Caco-2 (cell line): ENCODE measurements at regions of chr10 and their contacts with region 1.

Region 1: DNA sequence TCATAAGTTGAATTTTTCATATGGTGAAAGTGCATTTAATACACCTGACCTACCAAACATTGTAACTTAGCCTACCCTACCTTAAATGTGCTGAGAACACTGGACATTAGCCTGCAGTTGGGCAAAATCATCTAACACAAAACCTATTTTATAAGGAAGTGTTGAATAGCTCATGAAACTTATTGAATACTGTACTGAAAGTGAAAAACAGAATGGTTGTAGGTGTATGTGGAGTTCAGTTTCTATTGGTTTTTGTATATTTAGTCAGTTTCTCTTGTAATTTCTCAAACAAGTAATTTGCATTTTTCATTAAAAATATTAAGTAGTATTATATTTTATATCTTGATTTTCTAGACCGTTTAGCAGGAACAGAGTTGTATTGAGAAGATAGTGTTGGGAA is 15.3 kb downstream of the CCDC7 start:
- DNase-seq: no peak
- H3K4me3 ChIP-seq: no peak overlapping the region
- H3K4me3 Mint-ChIP-seq: no peak overlapping the region
- H3K27ac Mint-ChIP-seq: no peak overlapping the region
- H3K4me1 ChIP-seq: no peaks in the 10 kb centered on the region
- H3K4me1 Mint-ChIP-seq: no peaks in the 10 kb centered on the region
- H3K27me3 ChIP-seq: no peaks in the 10 kb centered on the region
- H3K27me3 Mint-ChIP-seq: peaks cover 2% of the 10 kb centered on the region
- CTCF ChIP-seq: no peak

Region 2: DNA sequence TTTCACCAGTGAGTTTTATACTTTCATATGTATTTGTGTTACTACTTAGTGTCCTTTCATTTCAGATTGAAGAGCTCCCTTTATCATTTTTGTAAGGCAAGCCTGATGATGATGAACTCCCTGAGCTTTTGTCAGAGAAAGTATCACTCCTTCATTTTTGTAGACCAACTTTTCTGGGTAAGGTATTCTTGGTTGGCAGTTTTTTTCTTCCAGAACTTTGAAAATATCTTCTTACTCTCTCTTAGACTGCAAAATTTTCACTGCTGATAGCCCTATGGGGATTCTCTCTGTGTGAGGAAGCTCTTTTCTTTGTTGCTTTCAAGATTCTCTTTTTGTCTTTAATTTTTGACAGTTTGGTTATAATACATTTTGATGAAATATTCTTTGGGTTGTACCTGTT is 20.4 kb after region 1 on chr10:
- CTCF ChIA-PET with region 1: no interaction called
- POLR2A ChIA-PET with region 1: no interaction called
- intact Hi-C with region 1: no loop called
- DNase-seq: no peak
- H3K4me3 ChIP-seq: no peak overlapping the region
- H3K4me3 Mint-ChIP-seq: no peak overlapping the region
- H3K27ac Mint-ChIP-seq: no peak overlapping the region
- H3K4me1 ChIP-seq: no peaks in the 10 kb centered on the region
- H3K4me1 Mint-ChIP-seq: no peaks in the 10 kb centered on the region
- H3K27me3 ChIP-seq: no peaks in the 10 kb centered on the region
- H3K27me3 Mint-ChIP-seq: peaks cover 5% of the 10 kb centered on the region
- CTCF ChIP-seq: no peak

Region 3: DNA sequence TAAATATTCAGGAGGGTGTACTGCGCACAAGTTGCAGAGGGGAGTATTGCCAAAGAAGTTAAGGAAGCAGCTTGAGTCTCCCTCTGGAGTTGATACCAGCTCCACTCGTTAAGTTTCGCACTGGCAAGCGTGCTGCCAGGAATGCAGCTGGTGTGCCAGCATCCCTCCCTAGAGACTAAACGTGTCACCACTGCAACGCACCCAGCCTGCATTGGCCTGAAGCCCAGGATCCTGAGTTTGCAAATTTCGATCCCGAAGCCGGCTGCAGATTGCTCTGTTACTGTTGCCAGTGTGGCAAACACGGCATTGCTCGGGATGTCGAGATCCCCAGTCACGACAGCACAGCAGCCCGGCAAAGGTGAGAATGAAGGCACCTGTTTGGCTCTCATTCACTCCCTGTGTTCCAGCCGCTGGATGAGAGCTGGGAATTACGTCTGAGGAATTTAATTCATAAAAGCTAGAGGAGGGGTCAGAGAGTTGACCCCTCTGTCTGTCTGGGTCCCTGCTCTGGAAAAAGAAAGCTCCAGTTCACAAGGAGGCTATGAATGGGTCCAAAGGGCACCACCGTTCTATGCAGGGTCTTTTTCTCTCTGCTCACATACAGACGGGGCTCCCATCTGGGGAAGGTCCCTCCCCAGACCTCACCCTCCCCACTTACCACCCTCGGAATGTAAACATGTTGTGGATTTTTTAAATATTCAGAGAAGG is 812.2 kb after region 1 on chr10:
- CTCF ChIA-PET with region 1: no interaction called
- POLR2A ChIA-PET with region 1: no interaction called
- intact Hi-C with region 1: loop called (anchors 5 kb)
- DNase-seq: no peak
- H3K4me3 ChIP-seq: no peak overlapping the region
- H3K4me3 Mint-ChIP-seq: no peak overlapping the region
- H3K27ac Mint-ChIP-seq: peak overlapping the region; percentile 42
- H3K4me1 ChIP-seq: peaks cover 34% of the 10 kb centered on the region
- H3K4me1 Mint-ChIP-seq: peaks cover 35% of the 10 kb centered on the region
- H3K27me3 ChIP-seq: no peaks in the 10 kb centered on the region
- H3K27me3 Mint-ChIP-seq: no peaks in the 10 kb centered on the region
- CTCF ChIP-seq: no peak